Cardiac septum (tissue), 1 donor: ENCODE measurements at regions of chr20 and their contacts with region 1.

Region 1: GRCh38 chr20:7285918-7286556 is 518.6 kb downstream of the BMP2 start:
- DNase-seq: peak; percentile 74

Region 2: GRCh38 chr20:6142348-6142993 is 1143.6 kb before region 1 on chr20:
- intact Hi-C with region 1: loop called (anchors 10 kb)
- DNase-seq: no peak

Region 3: GRCh38 chr20:6767536-6768227 is 518.4 kb before region 1 on chr20 and contains the start of gene BMP2:
- intact Hi-C with region 1: loop called (anchors 10 kb)
- DNase-seq: peak; percentile 77
- total RNA-seq, gene BMP2: 3.0 TPM

Region 4: GRCh38 chr20:6828794-6829423 is 457.1 kb before region 1 on chr20:
- intact Hi-C with region 1: loop called (anchors 10 kb)
- DNase-seq: no peak

Region 5: DNA sequence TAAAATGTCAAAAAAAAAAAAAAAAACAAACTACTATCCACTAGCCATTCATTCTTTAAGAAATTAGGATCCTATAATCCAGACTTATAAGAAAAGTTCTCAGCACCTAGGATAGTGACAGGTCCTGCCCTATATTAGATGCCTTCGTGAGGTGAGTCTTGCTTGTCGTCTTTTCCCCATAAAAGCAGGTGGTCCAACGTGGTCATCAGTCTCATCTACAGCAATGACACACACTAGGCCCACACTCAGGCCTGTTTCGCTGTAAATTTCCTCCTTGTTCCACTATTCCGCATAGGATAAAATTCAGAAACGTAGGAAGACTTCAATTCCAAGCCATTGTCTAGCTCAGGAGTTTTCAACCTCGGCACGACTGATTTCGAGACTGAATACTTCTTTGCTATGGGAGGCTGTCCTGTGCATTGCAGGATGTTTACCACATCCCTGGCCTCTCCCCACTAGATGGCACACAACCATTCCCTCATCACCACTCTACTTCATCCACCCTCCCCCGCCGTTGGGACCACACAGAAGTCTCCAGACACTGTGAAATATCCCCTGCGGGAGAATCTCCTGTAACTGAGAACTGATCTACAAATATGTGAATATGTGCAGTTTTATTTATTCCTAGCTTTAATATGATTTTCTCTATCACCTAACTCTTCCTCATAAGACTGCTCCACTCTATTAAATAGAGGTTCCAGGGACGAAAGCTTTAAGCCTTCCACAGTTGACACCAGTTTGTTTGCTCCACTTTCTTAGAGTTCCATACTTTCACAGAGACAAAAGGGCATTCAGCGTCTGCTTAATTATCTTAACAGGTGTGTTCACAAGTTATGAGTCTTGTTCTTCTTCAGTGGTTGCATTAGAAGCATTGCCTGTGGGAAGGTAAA is 172.2 kb before region 1 on chr20:
- intact Hi-C with region 1: loop called (anchors 5 kb)
- DNase-seq: no peak

Region 6: DNA sequence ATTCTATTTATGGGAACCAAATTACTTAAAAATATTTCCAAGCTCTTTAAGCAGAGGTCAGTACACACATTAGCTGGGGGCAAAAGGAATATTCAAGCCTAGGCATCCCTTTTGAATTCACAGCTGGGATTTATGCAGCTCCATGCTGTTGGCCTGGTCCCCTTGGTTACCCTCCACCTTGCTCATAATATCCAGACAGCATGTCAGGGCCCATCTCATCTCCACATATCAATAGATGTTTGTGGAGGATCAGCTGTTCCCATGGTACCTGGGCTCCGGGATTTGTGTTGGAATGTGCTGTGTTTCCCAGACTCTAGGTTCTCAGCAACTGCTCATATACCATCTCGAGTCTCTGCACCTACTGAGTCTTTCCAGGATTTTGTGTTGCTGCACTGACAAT is 16.2 kb after region 1 on chr20:
- intact Hi-C with region 1: no loop called
- DNase-seq: no peak

Region 7: GRCh38 chr20:7859356-7859802 is 573.3 kb after region 1 on chr20:
- intact Hi-C with region 1: loop called (anchors 5 kb)
- DNase-seq: no peak